ENCODE measurements at regions of chr20 and their contacts with region 1.

Region 1: GRCh38 chr20:42530822-42531448 is 658.8 kb downstream of the PTPRT start:
- DNase-seq: no peak
- ATAC-seq: peak; percentile 68
- H3K4me3 ChIP-seq: no peak overlapping the region
- H3K27ac ChIP-seq: no peak overlapping the region
- H3K4me1 ChIP-seq: no peaks in the 10 kb centered on the region
- H3K27me3 ChIP-seq: no peaks in the 10 kb centered on the region; a peak in 1 of 4 replicates
- CTCF ChIP-seq: peak; percentile 58 to 65 (median 64)
- EP300 ChIP-seq: no peak
- POLR2A ChIP-seq: no peak
- RAD21 ChIP-seq: peak; percentile 61

Region 2: DNA sequence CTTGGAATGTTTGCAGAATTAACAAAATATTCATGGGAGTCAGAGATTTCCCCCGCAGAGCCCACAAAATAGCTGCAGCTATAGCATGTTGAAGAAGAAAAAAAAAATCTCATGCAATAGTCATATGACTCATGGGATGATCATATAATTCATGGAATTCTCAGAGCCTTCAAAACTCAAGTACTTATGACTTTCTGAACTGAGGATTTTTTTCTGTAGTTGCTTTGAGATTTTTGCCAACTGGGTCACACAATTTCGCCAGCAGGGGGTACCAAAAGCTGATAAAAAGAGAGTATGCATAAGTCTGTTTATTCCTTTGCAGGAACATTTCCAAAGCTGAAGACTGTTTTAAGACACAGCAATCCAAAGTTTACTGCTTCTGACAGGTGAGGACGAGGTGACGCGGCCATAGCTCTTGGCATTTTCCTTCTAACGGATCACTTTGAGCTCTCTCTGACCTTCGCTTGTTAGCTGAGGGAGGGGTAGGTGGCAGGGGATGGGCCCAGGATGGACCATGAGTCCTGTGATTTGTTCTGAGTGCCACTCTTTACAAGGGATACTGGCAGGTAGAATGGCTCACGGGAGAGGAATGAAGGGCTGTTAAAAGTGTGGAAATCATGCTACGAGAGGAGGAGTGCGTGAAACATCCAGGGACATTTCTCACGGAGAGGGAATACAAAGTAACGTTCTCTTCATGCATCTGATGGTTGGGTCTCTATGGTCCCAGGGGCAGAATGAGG is 326.6 kb before region 1 on chr20:
- CTCF ChIA-PET with region 1: interaction called, 6 read pairs
- POLR2A ChIA-PET with region 1: no interaction called
- RAD21 ChIA-PET with region 1: no interaction called
- SMC1A ChIA-PET with region 1: no interaction called
- in situ Hi-C with region 1: no loop called
- intact Hi-C with region 1: loop called (anchors 1 kb)
- DNase-seq: no peak
- ATAC-seq: no peak
- H3K4me3 ChIP-seq: no peak overlapping the region
- H3K27ac ChIP-seq: no peak overlapping the region
- H3K4me1 ChIP-seq: no peaks in the 10 kb centered on the region
- H3K27me3 ChIP-seq: no peaks in the 10 kb centered on the region
- CTCF ChIP-seq: peak in 2 of 3 experiments; percentile 22; a peak in 2 of 6 replicates
- EP300 ChIP-seq: no peak
- POLR2A ChIP-seq: no peak
- RAD21 ChIP-seq: peak; percentile 17; the same call in 1 of the 2 replicates